Activated naive CD4-positive, alpha-beta T cell treated with anti-CD3 and anti-CD28 coated beads for 36 hours (primary cell): ENCODE measurements at regions of chr10 and their contacts with region 1.

Region 1: DNA sequence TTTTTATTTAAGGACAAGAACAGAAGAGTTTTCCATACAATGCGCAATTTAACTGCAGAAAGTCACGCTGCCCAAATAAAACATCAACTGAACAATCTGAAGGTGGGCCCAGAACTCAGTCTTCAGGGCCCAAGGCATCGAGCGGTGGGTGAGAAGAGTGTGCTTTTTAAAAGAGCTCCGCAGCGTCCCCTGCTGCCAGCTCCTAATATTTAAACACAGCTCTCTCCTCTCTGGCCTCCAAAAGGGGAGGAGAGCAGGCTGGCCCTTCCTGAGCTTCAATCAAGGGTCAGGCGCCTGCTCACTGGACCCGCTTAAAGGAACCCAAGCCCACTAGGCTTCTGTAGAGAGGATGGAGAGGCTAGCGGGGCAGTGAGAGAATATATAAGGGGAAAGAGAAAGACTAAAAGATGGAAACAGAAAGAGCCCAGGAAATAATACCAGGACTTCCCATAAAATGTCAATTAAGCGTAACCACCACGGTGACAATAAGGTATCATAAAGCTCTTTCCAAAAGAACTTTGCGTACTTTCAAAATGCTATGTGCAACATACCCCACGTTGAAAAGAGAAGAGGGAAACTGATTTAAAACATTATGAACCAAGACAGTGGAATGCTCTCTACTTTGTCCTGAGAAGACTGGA is 2.8 kb downstream of the FAM53B start:
- DNase-seq: peak; percentile 84
- H3K4me3 Mint-ChIP-seq: peak overlapping the region; percentile 52
- H3K27ac Mint-ChIP-seq: peak overlapping the region; percentile 68
- H3K4me1 Mint-ChIP-seq: peaks cover 68% of the 10 kb centered on the region
- H3K27me3 Mint-ChIP-seq: peaks cover 2% of the 10 kb centered on the region

Region 2: GRCh38 chr10:124461438-124462347 is 279.7 kb before region 1 on chr10 and contains the start of gene LHPP:
- CTCF ChIA-PET with region 1: no interaction called
- intact Hi-C with region 1: loop called (anchors 5 kb)
- DNase-seq: peak; percentile 90
- H3K4me3 Mint-ChIP-seq: peak within 1 kb of the TSS; percentile 77
- H3K27ac Mint-ChIP-seq: peak within 1 kb of the TSS; percentile 88
- H3K4me1 Mint-ChIP-seq: peaks cover 27% of the 10 kb centered on the region
- H3K27me3 Mint-ChIP-seq: peaks cover 2% of the 10 kb centered on the region
- total RNA-seq, gene LHPP: 17.7 TPM

Region 3: DNA sequence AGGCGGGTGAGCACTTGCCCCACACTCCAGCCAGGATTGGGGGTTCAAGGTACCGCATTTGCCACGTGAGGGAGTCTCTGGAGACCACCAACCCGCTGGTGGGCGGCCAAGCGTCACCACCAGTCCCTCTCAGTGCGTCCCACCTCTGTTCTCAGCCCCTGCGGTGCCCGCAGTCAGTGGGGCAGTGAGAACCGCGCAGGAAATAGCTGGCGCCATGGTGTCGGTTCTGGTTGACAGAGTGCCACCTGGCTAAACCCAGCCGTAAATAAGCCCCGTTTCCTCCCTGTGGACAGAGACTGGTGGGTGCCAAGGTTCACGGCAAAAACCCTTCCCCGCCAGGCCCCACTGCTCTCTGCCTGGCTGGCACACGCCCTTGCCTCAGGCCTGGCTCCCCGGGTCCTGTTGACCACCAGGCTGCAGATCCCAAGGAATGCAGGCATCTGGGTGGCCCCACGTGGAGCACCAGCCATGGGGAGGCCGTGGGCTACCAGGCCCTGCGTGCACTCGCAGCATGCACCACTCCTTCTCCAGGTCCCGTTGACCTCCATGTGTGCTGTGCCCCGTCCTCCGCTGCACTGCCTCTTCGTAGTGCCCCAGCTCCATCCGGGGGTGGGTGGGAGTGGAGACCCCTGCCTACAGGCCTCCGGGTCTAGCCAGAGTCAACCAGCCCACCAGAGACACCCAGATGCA is 139.8 kb before region 1 on chr10:
- CTCF ChIA-PET with region 1: no interaction called
- intact Hi-C with region 1: no loop called
- DNase-seq: no peak
- H3K4me3 Mint-ChIP-seq: no peak overlapping the region
- H3K27ac Mint-ChIP-seq: no peak overlapping the region
- H3K4me1 Mint-ChIP-seq: no peaks in the 10 kb centered on the region
- H3K27me3 Mint-ChIP-seq: no peaks in the 10 kb centered on the region

Region 4: GRCh38 chr10:124626759-124627380 is 114.5 kb before region 1 on chr10:
- CTCF ChIA-PET with region 1: interaction called, 14 read pairs
- intact Hi-C with region 1: loop called (anchors 1 kb)
- DNase-seq: peak; percentile 66
- H3K4me3 Mint-ChIP-seq: no peak overlapping the region
- H3K27ac Mint-ChIP-seq: no peak overlapping the region
- H3K4me1 Mint-ChIP-seq: peaks cover 26% of the 10 kb centered on the region
- H3K27me3 Mint-ChIP-seq: no peaks in the 10 kb centered on the region

Region 5: GRCh38 chr10:124671486-124672075 is 69.8 kb before region 1 on chr10:
- CTCF ChIA-PET with region 1: interaction called, 17 read pairs
- intact Hi-C with region 1: loop called (anchors 1 kb)
- DNase-seq: peak; percentile 59
- H3K4me3 Mint-ChIP-seq: no peak overlapping the region
- H3K27ac Mint-ChIP-seq: peak overlapping the region; percentile 64
- H3K4me1 Mint-ChIP-seq: peaks cover 73% of the 10 kb centered on the region
- H3K27me3 Mint-ChIP-seq: no peaks in the 10 kb centered on the region

Region 6: DNA sequence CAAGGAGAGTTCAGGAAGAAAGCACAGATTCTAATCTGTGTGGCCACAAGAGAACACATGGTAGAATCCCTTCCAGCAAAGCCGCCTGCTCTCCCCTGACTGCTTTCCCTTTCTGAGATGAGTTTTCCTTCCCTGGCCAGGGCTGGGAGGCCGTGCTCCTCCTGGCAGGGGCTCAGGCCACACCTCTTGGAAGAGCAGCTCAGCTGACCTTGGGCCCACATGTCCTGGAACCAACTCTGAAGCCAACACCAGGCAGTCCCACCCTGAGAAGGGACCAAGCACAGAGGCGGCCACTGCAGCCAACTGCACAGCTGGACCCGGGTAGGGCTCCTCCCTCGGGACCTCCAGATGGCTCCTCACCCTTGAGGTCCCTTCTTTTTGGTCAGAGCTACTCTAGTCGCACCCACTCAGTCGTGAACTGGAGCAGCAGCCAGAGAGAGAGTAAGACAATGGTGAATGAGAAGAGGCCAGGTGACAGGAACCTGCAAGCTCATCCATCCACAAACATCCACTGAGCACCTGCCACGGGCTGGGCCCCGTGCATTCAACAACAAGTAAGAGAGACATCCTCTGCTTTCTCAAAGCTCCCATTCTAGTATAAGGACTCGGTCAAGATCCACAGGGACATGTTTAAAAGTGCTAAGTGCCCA is 37.5 kb before region 1 on chr10:
- CTCF ChIA-PET with region 1: interaction called, 32 read pairs
- intact Hi-C with region 1: loop called (anchors 1 kb)
- DNase-seq: no peak
- H3K4me3 Mint-ChIP-seq: no peak overlapping the region
- H3K27ac Mint-ChIP-seq: no peak overlapping the region
- H3K4me1 Mint-ChIP-seq: peaks cover 83% of the 10 kb centered on the region
- H3K27me3 Mint-ChIP-seq: no peaks in the 10 kb centered on the region

Region 7: GRCh38 chr10:124791378-124792348 is 50.3 kb after region 1 on chr10 and contains the start of gene EEF1AKMT2:
- CTCF ChIA-PET with region 1: interaction called, 3 read pairs
- intact Hi-C with region 1: loop called (anchors 1 kb)
- DNase-seq: peak; percentile 79
- H3K4me3 Mint-ChIP-seq: peak within 1 kb of the TSS; percentile 84
- H3K27ac Mint-ChIP-seq: peak within 1 kb of the TSS; percentile 93
- H3K4me1 Mint-ChIP-seq: peaks cover 18% of the 10 kb centered on the region
- H3K27me3 Mint-ChIP-seq: no peaks in the 10 kb centered on the region
- total RNA-seq, gene EEF1AKMT2: 22.5 to 25.5 TPM